BJ (cell line): ENCODE measurements at regions of chr14 and their contacts with region 1.

Region 1: DNA sequence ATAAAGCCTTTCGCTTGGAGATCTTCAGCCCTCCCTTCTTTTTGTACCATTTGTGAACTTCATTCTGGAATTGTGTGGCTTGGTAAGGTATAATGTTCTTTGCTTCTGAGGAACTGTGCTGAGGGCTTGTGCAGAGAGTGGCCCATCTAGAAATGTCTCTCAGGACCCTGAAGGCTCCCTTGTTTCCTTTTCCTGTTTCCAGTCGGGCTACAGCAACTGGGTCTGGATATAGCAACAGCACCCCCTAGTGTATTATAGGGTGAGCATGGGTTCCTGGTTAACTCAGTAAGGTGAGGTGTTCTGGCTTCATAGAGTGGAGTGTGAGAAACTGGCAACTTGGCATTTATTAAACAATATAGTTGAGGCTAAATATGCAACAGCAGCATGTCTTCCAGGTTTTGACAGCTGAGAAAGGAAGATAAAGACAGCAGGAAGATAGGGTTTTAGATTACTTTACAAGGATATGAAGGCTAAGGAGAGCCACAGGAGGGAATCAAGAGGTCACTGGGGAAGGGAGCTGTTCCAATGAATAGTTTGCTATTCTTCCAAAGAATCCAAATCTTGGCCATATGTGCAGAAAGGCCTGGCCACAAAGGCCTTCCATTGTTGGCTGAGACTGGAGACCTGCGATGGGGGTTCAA is 49.1 kb upstream of the RNU6-8 start:
- DNase-seq: no peak
- H3K4me3 ChIP-seq: no peak overlapping the region
- H3K27me3 ChIP-seq: no peaks in the 10 kb centered on the region
- CTCF ChIP-seq: peak; percentile 86

Region 2: DNA sequence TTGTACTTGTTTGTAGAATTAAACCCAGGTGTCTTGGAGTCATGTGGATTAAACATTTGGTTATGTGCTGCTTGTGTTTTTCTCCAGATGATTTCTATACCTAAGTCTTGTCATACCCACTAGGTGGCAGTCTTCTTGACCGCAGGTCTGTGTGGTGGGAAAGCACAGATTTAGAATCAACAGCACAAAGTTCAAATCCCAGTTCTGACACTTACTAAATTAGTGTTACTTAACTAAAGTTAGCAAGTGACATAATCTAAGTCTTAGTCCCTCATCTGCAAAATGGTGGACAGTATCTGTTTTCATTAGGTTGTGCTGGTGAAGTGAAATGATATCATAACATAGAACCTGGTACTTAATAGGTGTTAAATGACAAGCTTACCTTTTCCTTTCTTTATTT is 326.0 kb before region 1 on chr14:
- CTCF ChIA-PET with region 1: interaction called, 14 read pairs
- POLR2A ChIA-PET with region 1: no interaction called
- DNase-seq: no peak
- H3K4me3 ChIP-seq: no peak overlapping the region
- H3K27me3 ChIP-seq: no peaks in the 10 kb centered on the region
- CTCF ChIP-seq: peak; percentile 51

Region 3: GRCh38 chr14:32076278-32077080 is 175.7 kb before region 1 on chr14:
- CTCF ChIA-PET with region 1: interaction called, 83 read pairs
- POLR2A ChIA-PET with region 1: interaction called, 4 read pairs
- DNase-seq: peak; percentile 74
- H3K4me3 ChIP-seq: peak overlapping the region; percentile 99
- H3K27me3 ChIP-seq: no peaks in the 10 kb centered on the region
- CTCF ChIP-seq: no peak

Region 4: GRCh38 chr14:32382704-32383103 is 130.6 kb after region 1 on chr14:
- CTCF ChIA-PET with region 1: interaction called, 13 read pairs
- POLR2A ChIA-PET with region 1: no interaction called
- DNase-seq: no peak
- H3K4me3 ChIP-seq: no peak overlapping the region
- H3K27me3 ChIP-seq: no peaks in the 10 kb centered on the region
- CTCF ChIP-seq: peak; percentile 57

Region 5: GRCh38 chr14:32469388-32470160 is 217.4 kb after region 1 on chr14:
- CTCF ChIA-PET with region 1: interaction called, 12 read pairs
- POLR2A ChIA-PET with region 1: interaction called, 8 read pairs
- DNase-seq: peak; percentile 47
- H3K4me3 ChIP-seq: no peak overlapping the region
- H3K27me3 ChIP-seq: no peaks in the 10 kb centered on the region
- CTCF ChIP-seq: peak; percentile 47

Region 6: GRCh38 chr14:32560209-32560857 is 308.2 kb after region 1 on chr14:
- CTCF ChIA-PET with region 1: interaction called, 27 read pairs
- POLR2A ChIA-PET with region 1: no interaction called
- DNase-seq: peak; percentile 58
- H3K4me3 ChIP-seq: no peak overlapping the region
- H3K27me3 ChIP-seq: no peaks in the 10 kb centered on the region
- CTCF ChIP-seq: peak; percentile 84